ENCODE measurements at regions of chr3 and their contacts with region 1.

Region 1: GRCh38 chr3:158781191-158781590 is 20.7 kb upstream of the MFSD1 start:
- DNase-seq: no peak
- H3K4me3 ChIP-seq: no peak overlapping the region
- H3K27ac ChIP-seq: no peak overlapping the region
- H3K4me1 ChIP-seq: peaks cover 0 to 6% (median 0%) of the 10 kb centered on the region in 6 donors
- H3K27me3 ChIP-seq: no peaks in the 10 kb centered on the region
- CTCF ChIP-seq: no peak
- POLR2A ChIP-seq: no peak

Region 2: GRCh38 chr3:158727206-158728060 is 53.8 kb before region 1 on chr3:
- intact Hi-C with region 1: loop called (anchors 5 kb)
- DNase-seq: no peak
- H3K4me3 ChIP-seq: peak overlapping the region in 1 of 8 donors; percentile 35
- H3K27ac ChIP-seq: peak overlapping the region in 5 of 8 donors; percentile 3 to 87 (median 16)
- H3K4me1 ChIP-seq: peaks cover 12 to 54% (median 39%) of the 10 kb centered on the region in 6 donors
- H3K27me3 ChIP-seq: peaks cover 0 to 11% (median 0%) of the 10 kb centered on the region in 7 donors
- CTCF ChIP-seq: peak; percentile 73 to 96 (median 88)
- POLR2A ChIP-seq: no peak